Astrocyte of the cerebellum (primary cell): ENCODE measurements at regions of chr4 and their contacts with region 1.

Region 1: GRCh38 chr4:159283696-159284492 is 181.0 kb downstream of the RAPGEF2 start:
- DNase-seq: peak; percentile 74
- H3K4me3 ChIP-seq: no peak overlapping the region
- CTCF ChIP-seq: no peak

Region 2: GRCh38 chr4:159352609-159353008 is 68.7 kb after region 1 on chr4:
- in situ Hi-C with region 1: loop called (anchors 5 kb)
- DNase-seq: no peak
- H3K4me3 ChIP-seq: no peak overlapping the region
- CTCF ChIP-seq: no peak